Endothelial cell of umbilical vein (primary cell): ENCODE measurements at regions of chr5 and their contacts with region 1.

Region 1: DNA sequence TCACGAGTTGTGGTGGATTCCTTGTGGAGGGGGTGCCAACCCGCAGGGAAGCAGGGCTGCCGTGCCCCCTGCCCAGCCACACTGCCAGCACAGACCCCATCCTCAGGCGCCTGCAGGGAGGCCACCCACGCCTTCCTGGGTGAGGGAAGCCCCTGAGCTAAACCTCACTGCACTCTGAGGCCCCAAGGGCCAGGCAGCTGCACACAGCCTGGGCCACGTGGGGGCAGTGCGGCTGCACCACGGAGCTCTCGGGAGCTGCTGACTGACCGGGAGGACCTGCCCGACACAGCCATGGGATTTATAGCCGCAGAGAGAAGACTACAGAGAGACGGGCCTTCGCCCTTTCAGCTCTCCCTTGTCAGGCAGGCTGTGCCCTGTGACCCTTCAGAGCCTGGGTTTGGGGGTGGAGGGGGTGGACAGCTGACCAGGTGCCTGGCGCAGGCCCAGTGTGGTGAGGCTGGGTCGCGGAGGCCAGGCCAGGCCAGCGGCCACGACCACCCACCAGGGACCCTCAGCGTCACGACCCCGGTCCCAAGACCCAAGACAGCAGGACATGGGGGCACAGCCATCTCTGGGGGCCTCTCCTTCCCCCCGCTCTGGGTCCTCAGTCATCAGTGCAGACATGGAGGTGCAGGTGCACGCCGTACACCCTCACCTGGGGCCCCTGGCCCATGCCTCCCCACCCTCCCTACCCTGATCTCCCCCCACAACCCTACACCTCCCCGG is 4.3 kb upstream of the AHRR start:
- DNase-seq: peak; percentile 46
- H3K4me3 ChIP-seq: no peak overlapping the region
- H3K27ac ChIP-seq: no peak overlapping the region
- H3K4me1 ChIP-seq: peaks cover 8% of the 10 kb centered on the region
- H3K27me3 ChIP-seq: peaks cover 2 to 8% of the 10 kb centered on the region in 2 experiments
- CTCF ChIP-seq: peak; percentile 74 to 90
- POLR2A ChIP-seq: no peak

Region 2: GRCh38 chr5:285639-286557 is 31.4 kb before region 1 on chr5:
- CTCF ChIA-PET with region 1: interaction called, 11 read pairs
- POLR2A ChIA-PET with region 1: no interaction called
- dilution Hi-C with region 1: no loop called
- intact Hi-C with region 1: no loop called
- DNase-seq: no peak
- H3K4me3 ChIP-seq: no peak overlapping the region
- H3K27ac ChIP-seq: no peak overlapping the region
- H3K4me1 ChIP-seq: no peaks in the 10 kb centered on the region
- H3K27me3 ChIP-seq: no peaks in the 10 kb centered on the region
- CTCF ChIP-seq: no peak
- POLR2A ChIP-seq: no peak

Region 3: GRCh38 chr5:329121-329735 is 12.0 kb after region 1 on chr5:
- CTCF ChIA-PET with region 1: no interaction called
- POLR2A ChIA-PET with region 1: no interaction called
- dilution Hi-C with region 1: no loop called
- intact Hi-C with region 1: no loop called
- DNase-seq: no peak
- H3K4me3 ChIP-seq: no peak overlapping the region
- H3K27ac ChIP-seq: no peak overlapping the region
- H3K4me1 ChIP-seq: no peaks in the 10 kb centered on the region
- H3K27me3 ChIP-seq: no peaks in the 10 kb centered on the region
- CTCF ChIP-seq: no peak
- POLR2A ChIP-seq: no peak

Region 4: GRCh38 chr5:431001-431710 is 113.9 kb after region 1 on chr5:
- CTCF ChIA-PET with region 1: interaction called, 94 read pairs
- POLR2A ChIA-PET with region 1: no interaction called
- dilution Hi-C with region 1: no loop called
- intact Hi-C with region 1: loop called (anchors 1 kb)
- DNase-seq: peak; percentile 50
- H3K4me3 ChIP-seq: no peak overlapping the region
- H3K27ac ChIP-seq: no peak overlapping the region
- H3K4me1 ChIP-seq: no peaks in the 10 kb centered on the region
- H3K27me3 ChIP-seq: no peaks in the 10 kb centered on the region
- CTCF ChIP-seq: peak; percentile 79 to 92
- POLR2A ChIP-seq: no peak

Region 5: GRCh38 chr5:472656-473553 is 155.7 kb after region 1 on chr5:
- CTCF ChIA-PET with region 1: interaction called, 11 read pairs
- POLR2A ChIA-PET with region 1: no interaction called
- dilution Hi-C with region 1: no loop called
- intact Hi-C with region 1: no loop called
- DNase-seq: peak; percentile 75
- H3K4me3 ChIP-seq: peak overlapping the region; percentile 49 to 79 (median 55)
- H3K27ac ChIP-seq: peak overlapping the region; percentile 82
- H3K4me1 ChIP-seq: peaks cover 6% of the 10 kb centered on the region
- H3K27me3 ChIP-seq: peaks cover 5 to 10% of the 10 kb centered on the region in 2 experiments
- CTCF ChIP-seq: no peak
- POLR2A ChIP-seq: peak; percentile 63